Posterior cingulate gyrus (tissue), 11 donors: ENCODE measurements at regions of chr7 and their contacts with region 1.

Region 1: DNA sequence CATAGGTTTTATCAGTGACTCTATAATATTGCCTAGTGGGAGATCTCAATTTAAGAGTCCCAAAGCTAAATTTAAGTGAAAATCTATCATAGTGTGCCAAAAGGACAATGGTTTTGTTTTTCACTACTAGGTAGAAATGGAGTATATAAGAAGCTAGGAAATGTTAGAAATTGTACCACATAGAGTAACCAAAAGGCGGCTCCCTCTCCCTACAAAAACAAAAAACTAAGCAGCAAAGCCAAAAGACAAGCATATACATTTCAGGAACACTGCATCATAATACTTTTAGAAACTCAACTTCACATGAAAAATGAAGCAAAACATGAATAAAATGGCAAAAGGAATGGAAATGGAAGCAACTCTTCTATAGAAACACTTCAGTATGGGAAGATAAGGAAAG is 271.6 kb downstream of the CACNA2D1 start:
- DNase-seq: no peak

Region 2: DNA sequence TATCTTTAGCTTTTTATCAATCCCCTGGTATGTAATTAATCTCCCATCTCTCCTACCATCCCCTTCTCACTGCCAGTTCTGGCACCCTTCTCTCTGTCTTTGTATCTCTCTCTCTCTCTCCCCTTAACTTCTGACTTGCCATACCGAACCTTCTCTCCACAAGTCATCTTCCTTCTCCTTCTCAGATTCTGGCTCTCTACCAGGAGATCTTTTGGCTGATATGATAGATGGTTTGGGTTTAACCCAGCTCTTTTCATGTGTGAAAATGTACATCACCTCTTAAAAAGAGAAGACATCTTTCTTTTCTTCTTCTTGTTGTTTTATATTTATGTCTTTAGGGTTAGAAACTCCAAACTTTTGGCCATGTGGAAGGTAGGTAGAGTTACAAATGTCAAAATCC is 598.9 kb before region 1 on chr7:
- intact Hi-C with region 1: no loop called
- DNase-seq: no peak

Region 3: GRCh38 chr7:81816312-81816711 is 355.7 kb before region 1 on chr7:
- intact Hi-C with region 1: no loop called
- DNase-seq: no peak

Region 4: GRCh38 chr7:82247814-82248433 is 75.9 kb after region 1 on chr7:
- intact Hi-C with region 1: no loop called
- DNase-seq: no peak

Region 5: GRCh38 chr7:82443547-82444219 is 271.7 kb after region 1 on chr7 and contains the start of gene CACNA2D1:
- intact Hi-C with region 1: loop called (anchors 10 kb)
- DNase-seq: peak; percentile 66 to 97 (median 78)

Region 6: GRCh38 chr7:82481499-82482097 is 309.6 kb after region 1 on chr7:
- intact Hi-C with region 1: no loop called
- DNase-seq: no peak

Region 7: GRCh38 chr7:82572195-82572880 is 400.3 kb after region 1 on chr7:
- intact Hi-C with region 1: loop called (anchors 5 kb)
- DNase-seq: peak; percentile 65 to 96 (median 90)